ENCODE measurements at regions of chr7 and their contacts with region 1.

Region 1: DNA sequence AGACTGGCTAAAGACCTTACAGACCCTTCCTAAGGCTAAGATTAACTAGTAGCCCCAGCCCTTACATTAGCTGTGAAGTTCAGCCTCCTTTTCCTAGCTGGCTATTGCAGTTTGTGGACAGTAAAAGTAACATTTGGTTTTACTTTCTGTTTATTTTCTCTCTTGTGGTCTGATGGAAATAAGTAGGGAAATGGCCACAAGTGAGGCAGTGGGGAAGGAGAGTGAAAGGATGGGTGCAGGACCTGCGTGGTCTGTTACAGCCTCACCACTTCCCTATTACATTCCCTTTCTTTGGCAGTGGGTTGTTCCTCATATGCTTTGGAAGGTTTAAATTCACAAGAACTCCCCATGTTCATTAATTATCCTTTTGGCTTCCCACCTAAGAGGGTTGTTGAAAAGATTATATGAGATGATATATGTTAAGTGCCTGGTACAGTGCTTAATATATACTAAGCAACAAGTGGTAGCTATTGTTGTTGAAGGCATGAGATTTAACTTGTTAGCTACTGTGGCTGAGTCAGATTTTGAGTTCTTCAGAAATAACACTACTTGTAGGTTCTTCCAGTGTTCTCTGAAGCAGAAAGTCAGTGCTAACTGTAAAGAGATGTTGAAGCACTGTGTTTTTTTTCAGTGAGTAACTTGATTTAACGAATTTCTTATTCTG is 181.7 kb downstream of the ST7 start:
- DNase-seq: no peak
- H3K4me3 ChIP-seq: no peak overlapping the region
- H3K27me3 ChIP-seq: no peaks in the 10 kb centered on the region
- CTCF ChIP-seq: no peak

Region 2: GRCh38 chr7:116395125-116395791 is 739.8 kb before region 1 on chr7:
- CTCF ChIA-PET with region 1: no interaction called
- POLR2A ChIA-PET with region 1: no interaction called
- DNase-seq: peak; percentile 63
- H3K4me3 ChIP-seq: no peak overlapping the region
- H3K27me3 ChIP-seq: no peaks in the 10 kb centered on the region
- CTCF ChIP-seq: no peak

Region 3: GRCh38 chr7:117157241-117158209 is 22.5 kb after region 1 on chr7:
- CTCF ChIA-PET with region 1: interaction called, 11 read pairs
- POLR2A ChIA-PET with region 1: no interaction called
- DNase-seq: peak; percentile 46
- H3K4me3 ChIP-seq: no peak overlapping the region
- H3K27me3 ChIP-seq: no peaks in the 10 kb centered on the region
- CTCF ChIP-seq: peak; percentile 48